CD8-positive, alpha-beta T cell (primary cell): ENCODE measurements at regions of chr9 and their contacts with region 1.

Region 1: GRCh38 chr9:6068983-6069382 is 53.6 kb upstream of the RANBP6 start:
- DNase-seq: peak in 3 of 9 experiments; percentile 30 to 86 (median 69)
- ATAC-seq: peak; percentile 96
- H3K4me3 ChIP-seq: peak overlapping the region in 1 of 2 experiments; percentile 9
- H3K4me3 Mint-ChIP-seq: peak overlapping the region; percentile 71
- H3K27ac ChIP-seq: peak overlapping the region; percentile 25 to 74
- H3K27ac Mint-ChIP-seq: peak overlapping the region; percentile 86
- H3K4me1 ChIP-seq: peaks cover 16% of the 10 kb centered on the region
- H3K4me1 Mint-ChIP-seq: peaks cover 18% of the 10 kb centered on the region
- H3K27me3 ChIP-seq: no peaks in the 10 kb centered on the region
- H3K27me3 Mint-ChIP-seq: no peaks in the 10 kb centered on the region
- CTCF ChIP-seq: no peak

Region 2: GRCh38 chr9:6080154-6080716 is 11.3 kb after region 1 on chr9:
- CTCF ChIA-PET with region 1: no interaction called
- POLR2A ChIA-PET with region 1: no interaction called
- intact Hi-C with region 1: loop called in 1 of 2 experiments (anchors 1 kb)
- DNase-seq: peak; percentile 34 to 90 (median 68)
- ATAC-seq: peak; percentile 89
- H3K4me3 ChIP-seq: peak overlapping the region; percentile 61 to 71
- H3K4me3 Mint-ChIP-seq: peak overlapping the region; percentile 93
- H3K27ac ChIP-seq: peak overlapping the region; percentile 46 to 67
- H3K27ac Mint-ChIP-seq: peak overlapping the region; percentile 90
- H3K4me1 ChIP-seq: no peaks in the 10 kb centered on the region
- H3K4me1 Mint-ChIP-seq: peaks cover 9% of the 10 kb centered on the region
- H3K27me3 ChIP-seq: no peaks in the 10 kb centered on the region
- H3K27me3 Mint-ChIP-seq: peaks cover 4% of the 10 kb centered on the region
- CTCF ChIP-seq: no peak

Region 3: DNA sequence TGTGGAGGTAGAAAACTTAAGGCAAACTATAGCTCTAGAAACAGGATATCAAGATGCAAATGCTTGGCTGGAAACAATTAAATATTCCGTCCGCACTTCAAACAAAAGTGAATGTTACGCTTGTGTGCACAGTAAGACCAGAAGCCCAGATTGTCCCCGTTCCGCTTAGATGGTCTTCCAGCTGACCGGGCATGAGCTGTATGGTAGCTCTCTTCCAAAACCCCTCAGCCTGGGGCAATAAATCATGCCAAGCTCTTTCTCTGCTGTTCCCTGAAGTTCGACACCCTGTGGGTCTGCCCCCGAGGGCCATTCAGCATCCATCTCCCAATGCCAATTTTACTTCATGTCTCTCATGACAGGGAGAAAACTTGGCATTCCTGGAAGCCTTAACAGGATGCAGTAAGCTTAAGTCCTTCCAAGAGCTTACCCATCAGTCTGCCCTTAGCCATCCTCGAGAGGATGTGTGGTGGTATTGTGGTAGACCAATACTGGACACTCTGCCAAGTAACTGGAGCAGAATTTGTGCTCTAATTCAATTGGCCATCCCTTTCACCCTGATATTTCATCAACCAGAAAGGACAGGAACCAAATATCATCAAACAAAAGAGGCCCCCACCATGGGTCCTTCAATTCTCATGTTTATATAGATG is 17.1 kb after region 1 on chr9:
- CTCF ChIA-PET with region 1: no interaction called
- POLR2A ChIA-PET with region 1: no interaction called
- intact Hi-C with region 1: loop called in 1 of 2 experiments (anchors 1 kb)
- DNase-seq: no peak
- ATAC-seq: no peak
- H3K4me3 ChIP-seq: no peak overlapping the region
- H3K4me3 Mint-ChIP-seq: no peak overlapping the region
- H3K27ac ChIP-seq: no peak overlapping the region
- H3K27ac Mint-ChIP-seq: no peak overlapping the region
- H3K4me1 ChIP-seq: no peaks in the 10 kb centered on the region
- H3K4me1 Mint-ChIP-seq: no peaks in the 10 kb centered on the region
- H3K27me3 ChIP-seq: no peaks in the 10 kb centered on the region
- H3K27me3 Mint-ChIP-seq: no peaks in the 10 kb centered on the region
- CTCF ChIP-seq: no peak